A673 (cell line): ENCODE measurements at regions of chr1 and their contacts with region 1.

Region 1: GRCh38 chr1:62011006-62011405 is 183.6 kb upstream of the L1TD1 start:
- DNase-seq: no peak
- H3K4me3 ChIP-seq: no peak overlapping the region
- H3K27ac ChIP-seq: no peak overlapping the region
- H3K4me1 ChIP-seq: no peaks in the 10 kb centered on the region
- H3K27me3 ChIP-seq: no peaks in the 10 kb centered on the region
- CTCF ChIP-seq: no peak

Region 2: GRCh38 chr1:62311473-62311943 is 300.5 kb after region 1 on chr1:
- CTCF ChIA-PET with region 1: no interaction called
- POLR2A ChIA-PET with region 1: interaction called, 15 read pairs
- intact Hi-C with region 1: no loop called
- DNase-seq: peak; percentile 76
- H3K4me3 ChIP-seq: no peak overlapping the region
- H3K27ac ChIP-seq: no peak overlapping the region
- H3K4me1 ChIP-seq: peaks cover 26% of the 10 kb centered on the region
- H3K27me3 ChIP-seq: peaks cover 10% of the 10 kb centered on the region
- CTCF ChIP-seq: no peak